ENCODE measurements at regions of chr16 and their contacts with region 1.

Region 1: GRCh38 chr16:30922960-30923535 is 324 bp upstream of the FBXL19 start:
- DNase-seq: peak; percentile 98
- ATAC-seq: peak; percentile 81
- H3K4me3 ChIP-seq: peak overlapping the region; percentile 86
- H3K27ac ChIP-seq: peak overlapping the region; percentile 78
- H3K4me1 ChIP-seq: peaks cover 7% of the 10 kb centered on the region
- H3K27me3 ChIP-seq: no peaks in the 10 kb centered on the region
- CTCF ChIP-seq: no peak

Region 2: DNA sequence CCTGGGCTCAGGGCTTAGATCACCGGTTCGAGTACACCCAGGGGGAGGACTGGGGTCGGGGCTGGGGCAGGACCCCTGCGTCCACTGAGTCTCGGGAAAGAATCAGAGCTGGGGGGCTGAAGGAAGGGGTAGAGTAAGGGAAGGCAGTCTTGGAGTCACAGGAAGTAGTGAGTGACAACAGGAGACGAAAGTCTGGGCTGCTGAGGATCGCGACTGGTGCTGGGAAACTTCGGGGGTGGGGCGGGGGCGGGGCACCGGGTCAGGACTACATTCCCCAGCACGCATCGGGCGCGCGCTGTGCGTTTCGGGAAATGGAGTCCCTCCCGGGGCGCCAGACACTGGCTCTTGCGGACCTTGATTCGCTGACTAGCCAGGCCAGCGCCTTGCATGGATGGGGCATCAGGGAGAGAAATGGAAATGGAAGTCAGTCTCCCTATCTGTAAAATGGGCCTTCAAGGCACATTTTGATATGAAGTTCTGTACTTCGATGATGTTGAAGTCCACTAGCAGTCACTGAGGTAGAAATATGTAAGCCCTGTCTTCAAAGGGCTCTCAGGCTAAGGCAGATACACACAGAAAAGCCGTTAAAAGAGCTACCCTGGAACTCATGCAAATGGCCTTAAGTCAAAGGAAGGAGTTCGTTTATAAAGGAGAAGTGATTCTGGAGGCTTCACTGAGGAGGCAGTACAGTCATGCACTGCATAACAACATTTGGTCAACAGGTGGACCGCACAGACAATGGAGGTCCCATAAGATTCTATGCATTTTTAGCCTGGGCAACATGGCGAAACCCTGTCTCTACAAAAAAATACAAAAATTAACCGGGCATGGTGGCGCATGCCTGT is 25.9 kb before region 1 on chr16:
- CTCF ChIA-PET with region 1: no interaction called
- POLR2A ChIA-PET with region 1: no interaction called
- intact Hi-C with region 1: loop called (anchors 1 kb)
- DNase-seq: peak; percentile 81
- ATAC-seq: peak; percentile 40
- H3K4me3 ChIP-seq: peak overlapping the region; percentile 70
- H3K27ac ChIP-seq: peak overlapping the region; percentile 86
- H3K4me1 ChIP-seq: peaks cover 28% of the 10 kb centered on the region
- H3K27me3 ChIP-seq: no peaks in the 10 kb centered on the region
- CTCF ChIP-seq: no peak